CD8-positive, alpha-beta T cell (primary cell): ENCODE measurements at regions of chr9 and their contacts with region 1.

Region 1: DNA sequence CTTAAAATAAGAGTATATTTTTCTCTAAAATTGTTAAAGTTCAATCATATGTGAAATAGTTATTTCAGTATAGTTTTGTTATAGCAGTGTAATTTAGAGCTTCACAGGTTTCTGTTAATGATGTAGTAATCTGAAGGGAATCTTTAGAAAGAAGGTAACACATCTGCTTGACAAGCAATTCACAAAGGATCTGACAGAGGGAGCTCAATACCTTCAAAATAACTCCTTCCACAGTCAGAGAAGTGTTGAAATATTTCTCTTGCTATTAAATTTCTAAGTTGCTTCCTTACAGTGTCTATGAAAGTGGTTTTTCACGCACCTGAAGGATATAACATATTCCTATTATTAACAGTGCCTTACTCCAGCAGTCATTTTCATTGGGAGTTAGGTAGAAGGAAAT is 44.9 kb downstream of the SLC25A51 start:
- DNase-seq: no peak
- ATAC-seq: no peak
- H3K4me3 ChIP-seq: no peak overlapping the region
- H3K4me3 Mint-ChIP-seq: no peak overlapping the region
- H3K27ac ChIP-seq: no peak overlapping the region
- H3K27ac Mint-ChIP-seq: no peak overlapping the region
- H3K4me1 ChIP-seq: no peaks in the 10 kb centered on the region
- H3K4me1 Mint-ChIP-seq: no peaks in the 10 kb centered on the region
- H3K27me3 ChIP-seq: no peaks in the 10 kb centered on the region
- H3K27me3 Mint-ChIP-seq: no peaks in the 10 kb centered on the region
- CTCF ChIP-seq: no peak

Region 2: DNA sequence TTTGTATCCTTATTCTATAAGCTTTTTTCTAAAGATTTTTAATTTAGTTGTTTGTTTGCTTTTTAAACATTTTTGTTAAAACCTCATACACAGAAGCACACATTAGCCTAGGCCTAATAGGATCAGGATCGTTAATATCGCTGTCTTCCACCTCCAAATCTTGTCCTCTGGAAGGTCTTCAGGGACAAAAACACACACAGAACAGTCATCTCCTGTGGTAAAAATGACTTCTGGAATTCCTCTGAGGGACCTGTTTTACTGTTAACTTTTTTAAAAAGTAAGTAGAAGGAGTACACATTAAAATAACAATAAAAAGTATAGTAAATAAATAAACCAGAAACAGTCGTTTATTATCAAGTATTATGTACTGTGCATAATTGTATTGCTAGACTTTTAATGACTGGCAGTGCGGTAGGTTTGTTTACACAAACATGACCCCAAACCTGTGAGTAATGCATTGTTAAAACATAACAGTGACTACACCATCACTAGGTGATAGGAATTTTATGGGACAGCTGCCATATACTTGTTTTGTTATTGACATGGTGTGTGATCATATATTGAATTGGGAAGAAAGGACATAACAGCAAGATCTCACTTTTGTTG is 629.1 kb before region 1 on chr9:
- CTCF ChIA-PET with region 1: no interaction called
- POLR2A ChIA-PET with region 1: no interaction called
- intact Hi-C with region 1: loop called in 1 of 2 experiments (anchors 10 kb)
- DNase-seq: no peak
- ATAC-seq: no peak
- H3K4me3 ChIP-seq: no peak overlapping the region
- H3K4me3 Mint-ChIP-seq: no peak overlapping the region
- H3K27ac ChIP-seq: no peak overlapping the region
- H3K27ac Mint-ChIP-seq: no peak overlapping the region
- H3K4me1 ChIP-seq: no peaks in the 10 kb centered on the region
- H3K4me1 Mint-ChIP-seq: peaks cover 23% of the 10 kb centered on the region
- H3K27me3 ChIP-seq: no peaks in the 10 kb centered on the region
- H3K27me3 Mint-ChIP-seq: no peaks in the 10 kb centered on the region
- CTCF ChIP-seq: no peak

Region 3: GRCh38 chr9:38010918-38011704 is 152.1 kb after region 1 on chr9:
- CTCF ChIA-PET with region 1: no interaction called
- POLR2A ChIA-PET with region 1: no interaction called
- intact Hi-C with region 1: loop called in 1 of 2 experiments (anchors 5 kb)
- DNase-seq: no peak
- ATAC-seq: no peak
- H3K4me3 ChIP-seq: no peak overlapping the region
- H3K4me3 Mint-ChIP-seq: no peak overlapping the region
- H3K27ac ChIP-seq: no peak overlapping the region
- H3K27ac Mint-ChIP-seq: no peak overlapping the region
- H3K4me1 ChIP-seq: peaks cover 11% of the 10 kb centered on the region
- H3K4me1 Mint-ChIP-seq: peaks cover 13% of the 10 kb centered on the region
- H3K27me3 ChIP-seq: no peaks in the 10 kb centered on the region
- H3K27me3 Mint-ChIP-seq: no peaks in the 10 kb centered on the region
- CTCF ChIP-seq: no peak